T-cell (primary cell): ENCODE measurements at regions of chr13 and their contacts with region 1.

Region 1: GRCh38 chr13:27587095-27587746 is 33.1 kb downstream of the LNX2 start:
- DNase-seq: no peak
- ATAC-seq: no peak
- H3K4me3 ChIP-seq: no peak overlapping the region
- H3K4me3 Mint-ChIP-seq: no peak overlapping the region
- H3K27ac ChIP-seq: no peak overlapping the region
- H3K27ac Mint-ChIP-seq: peak overlapping the region in 1 of 2 donors; percentile 57
- H3K4me1 ChIP-seq: peaks cover 3 to 6% of the 10 kb centered on the region in 2 experiments
- H3K4me1 Mint-ChIP-seq: peaks cover 22 to 36% (median 35%) of the 10 kb centered on the region in 3 donors
- H3K27me3 ChIP-seq: no peaks in the 10 kb centered on the region
- H3K27me3 Mint-ChIP-seq: no peaks in the 10 kb centered on the region

Region 2: GRCh38 chr13:27631665-27632064 is 44.4 kb after region 1 on chr13:
- CTCF ChIA-PET with region 1: interaction called in 1 of 2 experiments, 10 read pairs
- POLR2A ChIA-PET with region 1: no interaction called
- DNase-seq: no peak
- ATAC-seq: no peak
- H3K4me3 ChIP-seq: no peak overlapping the region
- H3K4me3 Mint-ChIP-seq: no peak overlapping the region
- H3K27ac ChIP-seq: no peak overlapping the region
- H3K27ac Mint-ChIP-seq: no peak overlapping the region
- H3K4me1 ChIP-seq: peaks cover 3 to 6% of the 10 kb centered on the region in 2 experiments
- H3K4me1 Mint-ChIP-seq: peaks cover 57 to 81% (median 71%) of the 10 kb centered on the region in 3 donors
- H3K27me3 ChIP-seq: no peaks in the 10 kb centered on the region
- H3K27me3 Mint-ChIP-seq: no peaks in the 10 kb centered on the region